ENCODE measurements at regions of chr3 and their contacts with region 1.

Region 1: DNA sequence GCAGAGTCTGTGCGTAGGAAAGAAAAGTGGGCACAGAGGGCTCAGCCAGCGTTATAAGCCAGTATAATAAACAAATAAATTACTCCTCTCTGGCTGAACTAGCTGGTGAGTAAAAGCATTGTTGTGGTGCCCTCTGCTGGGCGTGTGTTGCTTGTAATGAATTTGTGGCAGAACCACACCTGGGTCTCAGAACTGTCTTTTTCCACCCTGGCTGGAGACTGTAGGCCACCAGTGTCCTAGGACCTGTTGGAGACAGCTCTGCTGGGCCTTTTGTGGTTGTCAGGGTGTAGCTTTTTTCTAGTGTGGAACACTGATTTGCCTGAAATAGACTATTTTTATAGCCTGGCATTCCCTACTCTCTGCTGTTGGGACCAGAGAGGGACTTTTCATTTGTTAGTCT is 130.5 kb upstream of the EIF1B start:
- DNase-seq: peak; percentile 73 to 97 (median 90)

Region 2: GRCh38 chr3:39541917-39542329 is 637.1 kb before region 1 on chr3:
- intact Hi-C with region 1: loop called (anchors 2 kb)
- DNase-seq: no peak

Region 3: GRCh38 chr3:39668420-39668819 is 510.6 kb before region 1 on chr3:
- intact Hi-C with region 1: loop called (anchors 1 kb)
- DNase-seq: peak in 1 of 10 donors; percentile 10

Region 4: DNA sequence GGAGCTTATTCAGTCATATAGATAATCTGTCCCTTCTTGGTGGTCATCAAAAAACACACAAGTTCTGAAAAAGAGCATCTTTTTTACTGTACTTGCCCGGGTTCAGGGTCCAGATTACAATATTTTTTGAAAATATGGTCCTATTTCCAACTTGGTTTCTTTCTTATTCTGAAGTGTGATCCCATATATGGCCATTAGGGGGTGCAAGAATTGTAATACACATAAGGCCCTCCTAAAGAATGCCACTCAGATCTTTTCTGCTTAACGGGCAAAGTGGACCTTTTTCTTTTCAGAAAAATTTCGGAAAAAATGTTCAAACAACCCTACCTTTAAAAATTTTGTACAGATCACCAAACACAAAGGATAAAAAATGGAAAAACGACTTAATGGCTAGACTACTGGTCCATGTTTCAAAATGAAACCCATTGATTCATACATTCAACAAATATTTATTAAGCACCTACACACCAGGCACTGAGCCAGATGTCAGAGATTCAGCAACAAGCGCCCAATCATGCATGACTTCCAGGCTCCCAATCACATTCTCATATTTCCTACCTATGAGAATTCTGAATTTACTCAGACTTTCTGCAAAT is 471.6 kb before region 1 on chr3:
- intact Hi-C with region 1: loop called (anchors 2 kb)
- DNase-seq: no peak

Region 5: GRCh38 chr3:39727415-39727814 is 451.6 kb before region 1 on chr3:
- intact Hi-C with region 1: loop called (anchors 5 kb)
- DNase-seq: peak in 1 of 10 donors; percentile 42

Region 6: GRCh38 chr3:39812537-39812936 is 366.5 kb before region 1 on chr3:
- intact Hi-C with region 1: loop called (anchors 1 kb)
- DNase-seq: peak in 7 of 10 donors; percentile 31 to 88 (median 52)

Region 7: DNA sequence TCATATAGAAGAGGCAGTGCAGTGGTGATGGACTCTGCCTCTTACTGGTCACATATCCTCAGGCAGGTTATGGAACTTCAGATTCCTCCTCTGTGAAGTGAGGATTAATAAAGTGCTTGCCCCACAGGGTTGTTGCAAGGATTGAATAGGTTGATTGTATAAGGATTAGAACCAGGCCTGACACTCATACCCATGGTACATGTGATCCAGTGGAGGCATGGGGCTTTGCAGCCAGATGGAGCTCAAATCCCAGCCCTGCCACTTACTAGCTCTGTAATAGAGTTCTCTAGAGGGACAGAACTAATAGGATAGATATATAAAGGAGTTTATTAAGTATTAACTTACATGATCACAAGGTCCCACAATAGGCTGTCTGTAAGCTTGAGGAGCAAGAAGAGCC is 54.1 kb before region 1 on chr3:
- intact Hi-C with region 1: loop called (anchors 2 kb)
- DNase-seq: peak in 5 of 10 donors; percentile 12 to 90 (median 48)

Region 8: DNA sequence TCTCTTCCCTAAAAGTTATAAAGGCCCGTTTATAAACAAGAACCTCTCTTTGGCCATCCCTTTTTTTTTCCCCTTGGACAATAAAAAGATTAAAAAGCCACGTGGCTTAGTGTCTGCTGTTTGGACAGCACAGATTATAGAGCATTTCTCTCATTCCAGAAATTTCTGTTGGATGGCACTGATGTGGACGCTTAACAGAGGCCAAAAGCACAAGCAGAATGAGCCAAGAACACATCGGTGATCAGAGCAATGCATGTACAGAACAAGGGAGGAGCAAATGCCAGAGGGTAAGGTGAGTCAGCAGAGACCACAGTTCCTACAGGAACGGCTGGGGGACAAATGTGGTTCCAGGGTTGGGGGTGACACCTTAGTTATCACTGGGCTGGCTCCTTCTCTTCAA is 990.0 kb after region 1 on chr3:
- intact Hi-C with region 1: no loop called
- DNase-seq: no peak

Measured in posterior cingulate gyrus (tissue), 11 donors.